ENCODE measurements at regions of chr1 and their contacts with region 1.

Region 1: DNA sequence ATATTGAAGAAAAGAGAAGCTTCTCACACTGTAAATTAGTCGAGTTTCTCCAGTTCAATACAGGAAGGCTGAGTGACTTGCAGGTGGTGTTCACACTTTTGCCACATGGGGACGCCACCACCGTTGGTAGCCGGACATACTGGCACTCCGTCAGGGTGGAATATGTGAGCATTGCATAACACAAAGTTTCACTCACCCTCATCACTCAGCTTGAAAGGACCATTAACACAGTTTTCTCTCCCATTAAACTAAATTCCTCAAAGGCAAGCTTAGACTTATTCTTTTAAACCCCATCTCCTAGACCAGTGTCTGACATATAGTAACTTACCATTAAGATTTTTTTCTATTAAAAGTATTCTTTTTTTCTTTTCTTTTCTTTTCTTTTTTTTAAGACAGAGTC is 105.3 kb upstream of the SERBP1 start:
- DNase-seq: peak; percentile 45
- H3K4me3 ChIP-seq: no peak overlapping the region
- H3K27me3 ChIP-seq: no peaks in the 10 kb centered on the region
- CTCF ChIP-seq: peak; percentile 99

Region 2: DNA sequence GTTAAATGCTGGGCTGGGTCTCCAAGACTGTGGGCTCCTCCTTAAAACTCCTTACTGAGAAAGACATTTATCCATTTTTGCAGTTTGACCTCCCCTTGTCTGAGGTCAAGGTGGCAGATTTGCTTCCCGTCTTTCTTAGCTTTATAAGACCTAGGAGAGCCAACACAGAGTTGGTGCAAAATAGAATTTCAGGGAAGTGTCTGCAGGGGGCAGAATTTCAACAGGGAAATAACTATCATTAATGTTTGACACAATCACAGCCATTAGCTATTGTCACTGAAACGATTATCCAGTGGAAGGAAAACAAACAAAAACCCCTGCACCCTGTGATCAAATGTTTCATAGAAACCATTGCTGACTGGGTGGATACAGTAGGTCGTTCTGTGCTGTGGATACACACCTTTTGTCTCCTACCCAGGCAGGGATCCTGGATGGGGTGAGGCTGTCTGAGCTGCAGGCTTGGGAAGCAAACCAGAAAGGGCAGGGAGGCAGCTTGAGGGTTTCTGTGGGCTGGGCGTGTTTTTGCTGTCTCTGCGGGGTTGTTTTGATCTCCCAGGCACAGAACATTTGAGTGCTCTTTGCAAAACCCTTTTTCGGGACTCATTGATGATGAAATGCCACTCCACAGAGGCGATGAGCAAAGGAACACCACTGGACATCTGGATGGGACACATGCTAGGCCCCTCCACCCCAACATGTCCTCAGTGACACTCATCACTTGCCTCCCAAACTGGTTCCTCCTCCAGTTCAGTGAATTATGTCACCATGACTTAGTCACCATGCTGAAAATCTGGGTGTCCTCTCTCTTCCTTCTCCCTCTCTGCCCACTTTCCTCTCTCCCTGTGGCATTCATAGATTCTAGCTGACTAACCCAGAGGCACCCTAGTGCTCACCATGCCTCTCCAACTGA is 11.1 kb before region 1 on chr1:
- CTCF ChIA-PET with region 1: interaction called, 23 read pairs
- POLR2A ChIA-PET with region 1: no interaction called
- DNase-seq: no peak
- H3K4me3 ChIP-seq: no peak overlapping the region
- H3K27me3 ChIP-seq: no peaks in the 10 kb centered on the region
- CTCF ChIP-seq: no peak

Region 3: GRCh38 chr1:67674260-67675011 is 139.0 kb after region 1 on chr1:
- CTCF ChIA-PET with region 1: interaction called, 10 read pairs
- POLR2A ChIA-PET with region 1: no interaction called
- DNase-seq: no peak
- H3K4me3 ChIP-seq: no peak overlapping the region
- H3K27me3 ChIP-seq: no peaks in the 10 kb centered on the region
- CTCF ChIP-seq: no peak

Region 4: DNA sequence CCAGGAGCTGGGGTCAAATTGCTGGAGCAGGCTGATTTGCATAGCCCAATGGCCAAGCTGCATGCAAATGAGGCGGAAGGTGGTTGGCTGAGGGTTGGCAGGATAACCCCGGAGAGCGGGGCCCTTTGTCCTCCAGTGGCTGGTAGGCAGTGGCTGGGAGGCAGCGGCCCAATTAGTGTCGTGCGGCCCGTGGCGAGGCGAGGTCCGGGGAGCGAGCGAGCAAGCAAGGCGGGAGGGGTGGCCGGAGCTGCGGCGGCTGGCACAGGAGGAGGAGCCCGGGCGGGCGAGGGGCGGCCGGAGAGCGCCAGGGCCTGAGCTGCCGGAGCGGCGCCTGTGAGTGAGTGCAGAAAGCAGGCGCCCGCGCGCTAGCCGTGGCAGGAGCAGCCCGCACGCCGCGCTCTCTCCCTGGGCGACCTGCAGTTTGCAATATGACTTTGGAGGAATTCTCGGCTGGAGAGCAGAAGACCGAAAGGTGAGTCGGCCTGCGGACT is 149.6 kb after region 1 on chr1 and contains the start of gene GADD45A:
- CTCF ChIA-PET with region 1: interaction called, 56 read pairs
- POLR2A ChIA-PET with region 1: interaction called, 3 read pairs
- DNase-seq: peak; percentile 97
- H3K4me3 ChIP-seq: peak within 1 kb of the TSS; percentile 85
- H3K27me3 ChIP-seq: no peaks in the 10 kb centered on the region
- CTCF ChIP-seq: no peak
- polyA plus RNA-seq, gene GADD45A: 27.4 and 32.1 TPM in 2 replicates